H1 (cell line): ENCODE measurements at regions of chr6 and their contacts with region 1.

Region 1: GRCh38 chr6:27138837-27139755 is 108.4 kb upstream of the PRSS16 start:
- DNase-seq: peak; percentile 91 to 92
- H3K4me3 ChIP-seq: peak overlapping the region; percentile 50 to 95 (median 70)
- H3K27ac ChIP-seq: peak overlapping the region; percentile 95
- H3K4me1 ChIP-seq: peaks cover 0 to 10% (median 4%) of the 10 kb centered on the region in 4 experiments; a peak in 5 of 7 replicates
- H3K27me3 ChIP-seq: no peaks in the 10 kb centered on the region
- CTCF ChIP-seq: no peak
- EP300 ChIP-seq: peak; percentile 40 to 99
- POLR2A ChIP-seq: peak; percentile 91 to 99
- RAD21 ChIP-seq: no peak

Region 2: DNA sequence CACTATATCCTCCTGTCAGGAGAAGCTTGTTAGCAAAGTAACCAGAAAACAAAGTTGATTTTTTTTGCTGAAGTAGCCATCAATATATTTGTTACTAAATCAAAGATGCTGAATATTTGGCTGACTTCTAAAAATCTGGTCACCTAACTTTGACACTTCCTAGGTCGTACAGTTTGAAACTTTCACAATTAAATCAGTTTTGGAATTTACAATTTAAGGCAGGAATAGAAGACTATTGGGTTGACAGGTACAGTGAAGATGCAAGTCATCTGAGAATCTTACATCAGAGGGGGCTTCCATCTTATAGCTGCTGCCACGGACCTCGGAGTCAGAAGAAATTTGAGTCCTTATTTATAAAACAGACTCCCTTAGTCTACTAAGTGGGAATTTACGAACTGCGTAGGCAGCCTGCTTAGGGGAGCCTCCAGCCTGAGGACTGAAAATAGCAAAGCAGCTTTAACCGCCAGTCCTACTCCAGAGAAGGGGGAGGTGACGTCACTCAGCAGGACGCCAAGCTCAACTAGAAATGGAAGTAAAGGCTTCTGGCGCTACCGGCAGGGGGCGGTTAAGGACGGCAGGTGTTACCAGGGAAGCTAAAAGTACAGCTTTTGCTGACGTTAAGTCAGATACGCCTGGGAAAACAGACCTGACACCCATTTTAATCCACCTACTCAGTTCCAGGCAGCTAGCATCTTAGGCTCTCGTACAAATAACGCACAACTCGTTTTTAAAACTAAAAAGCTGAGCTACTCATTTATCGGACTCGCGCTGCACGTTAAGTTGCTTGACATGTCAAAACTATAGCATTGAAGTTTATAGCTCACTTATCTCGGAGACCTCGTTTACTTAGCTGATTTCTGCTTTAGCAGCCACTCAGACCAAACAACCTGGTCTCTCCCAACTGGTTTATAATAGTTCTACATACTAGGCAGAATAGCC is 1112.9 kb before region 1 on chr6:
- CTCF ChIA-PET with region 1: no interaction called
- POLR2A ChIA-PET with region 1: interaction called, 39 read pairs
- DNase-seq: peak; percentile 90 to 93
- H3K4me3 ChIP-seq: peak overlapping the region; percentile 75 to 89 (median 82)
- H3K27ac ChIP-seq: peak overlapping the region; percentile 80
- H3K4me1 ChIP-seq: peaks cover 3 to 26% (median 10%) of the 10 kb centered on the region in 4 experiments; a peak in 5 of 7 replicates
- H3K27me3 ChIP-seq: no peaks in the 10 kb centered on the region
- CTCF ChIP-seq: peak; percentile 63 to 93 (median 77)
- EP300 ChIP-seq: peak in 1 of 2 experiments; percentile 43; a peak in 1 of 3 replicates
- POLR2A ChIP-seq: peak; percentile 85 to 91; a peak in 2 of 3 replicates
- RAD21 ChIP-seq: peak; percentile 45 to 47

Region 3: GRCh38 chr6:26196846-26197648 is 942.0 kb before region 1 on chr6:
- CTCF ChIA-PET with region 1: no interaction called
- POLR2A ChIA-PET with region 1: interaction called, 76 read pairs
- DNase-seq: peak in 1 of 2 experiments; percentile 76
- H3K4me3 ChIP-seq: peak overlapping the region; percentile 85 to 98 (median 89)
- H3K27ac ChIP-seq: peak overlapping the region; percentile 82
- H3K4me1 ChIP-seq: peaks cover 0 to 1% (median 0%) of the 10 kb centered on the region in 4 experiments; a peak in 1 of 7 replicates
- H3K27me3 ChIP-seq: no peaks in the 10 kb centered on the region
- CTCF ChIP-seq: no peak
- EP300 ChIP-seq: no peak
- POLR2A ChIP-seq: peak; percentile 99
- RAD21 ChIP-seq: no peak

Region 4: DNA sequence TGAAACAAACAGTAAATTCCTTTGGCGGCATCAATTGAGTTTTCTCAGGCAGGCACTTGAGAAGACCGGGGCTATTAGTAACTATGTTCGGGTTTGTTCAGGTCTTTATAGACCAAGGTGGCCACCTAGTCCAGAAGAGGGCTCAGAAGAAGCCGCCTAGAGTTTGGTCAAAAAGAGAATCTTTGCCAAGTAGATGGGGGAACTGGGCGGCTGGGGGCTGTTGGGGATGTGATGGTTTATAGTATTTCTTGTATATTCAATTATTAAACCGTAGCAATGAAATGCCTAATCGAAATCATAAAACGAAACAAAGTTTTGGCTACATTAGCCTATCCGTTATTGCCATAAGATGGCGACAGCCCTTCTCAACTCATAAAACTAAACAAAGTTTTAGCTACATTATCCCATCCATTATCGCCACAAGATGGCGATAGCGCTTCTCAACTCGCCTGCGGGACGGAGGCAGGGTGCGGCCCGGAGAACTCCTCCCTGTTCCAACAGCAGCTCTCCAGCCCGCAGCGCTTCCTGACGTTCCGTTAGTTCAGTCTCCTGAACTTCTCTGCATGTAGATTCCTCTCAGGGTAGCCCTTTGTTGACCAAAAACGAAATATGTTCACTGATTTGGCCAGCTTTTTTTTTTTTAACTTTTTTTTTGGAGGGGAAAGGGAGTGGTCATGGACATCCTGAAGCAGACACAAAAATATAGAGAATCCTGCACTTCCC is 12.1 kb before region 1 on chr6:
- CTCF ChIA-PET with region 1: interaction called, 5 read pairs
- POLR2A ChIA-PET with region 1: interaction called, 824 read pairs
- DNase-seq: peak in 1 of 2 experiments; percentile 83
- H3K4me3 ChIP-seq: peak overlapping the region in 3 of 4 experiments; percentile 22 to 57 (median 38); a peak in 5 of 8 replicates
- H3K27ac ChIP-seq: no peak overlapping the region
- H3K4me1 ChIP-seq: peaks cover 0 to 2% (median 0%) of the 10 kb centered on the region in 4 experiments; a peak in 1 of 7 replicates
- H3K27me3 ChIP-seq: no peaks in the 10 kb centered on the region
- CTCF ChIP-seq: peak; percentile 65 to 90 (median 84)
- EP300 ChIP-seq: no peak
- POLR2A ChIP-seq: no peak; a peak in 1 of 3 replicates
- RAD21 ChIP-seq: peak; percentile 78 to 81

Region 5: GRCh38 chr6:27177485-27178406 is 38.6 kb after region 1 on chr6:
- CTCF ChIA-PET with region 1: no interaction called
- POLR2A ChIA-PET with region 1: interaction called, 20 read pairs
- DNase-seq: peak in 1 of 2 experiments; percentile 84
- H3K4me3 ChIP-seq: peak overlapping the region; percentile 96 to 100 (median 100)
- H3K27ac ChIP-seq: peak overlapping the region; percentile 89
- H3K4me1 ChIP-seq: peaks cover 0 to 6% (median 1%) of the 10 kb centered on the region in 4 experiments; a peak in 3 of 7 replicates
- H3K27me3 ChIP-seq: no peaks in the 10 kb centered on the region
- CTCF ChIP-seq: peak; percentile 38 to 63 (median 47)
- EP300 ChIP-seq: no peak
- POLR2A ChIP-seq: peak; percentile 64 to 70
- RAD21 ChIP-seq: peak; percentile 48 to 63

Region 6: GRCh38 chr6:27838058-27838944 is 699.2 kb after region 1 on chr6:
- CTCF ChIA-PET with region 1: no interaction called
- POLR2A ChIA-PET with region 1: interaction called, 106 read pairs
- DNase-seq: peak; percentile 76 to 87
- H3K4me3 ChIP-seq: peak overlapping the region; percentile 77 to 96 (median 93)
- H3K27ac ChIP-seq: peak overlapping the region; percentile 98
- H3K4me1 ChIP-seq: peaks cover 0 to 5% (median 2%) of the 10 kb centered on the region in 4 experiments; a peak in 1 of 7 replicates
- H3K27me3 ChIP-seq: no peaks in the 10 kb centered on the region
- CTCF ChIP-seq: no peak
- EP300 ChIP-seq: no peak
- POLR2A ChIP-seq: peak; percentile 88 to 91
- RAD21 ChIP-seq: no peak